ENCODE measurements at regions of chr9 and their contacts with region 1.

Region 1: DNA sequence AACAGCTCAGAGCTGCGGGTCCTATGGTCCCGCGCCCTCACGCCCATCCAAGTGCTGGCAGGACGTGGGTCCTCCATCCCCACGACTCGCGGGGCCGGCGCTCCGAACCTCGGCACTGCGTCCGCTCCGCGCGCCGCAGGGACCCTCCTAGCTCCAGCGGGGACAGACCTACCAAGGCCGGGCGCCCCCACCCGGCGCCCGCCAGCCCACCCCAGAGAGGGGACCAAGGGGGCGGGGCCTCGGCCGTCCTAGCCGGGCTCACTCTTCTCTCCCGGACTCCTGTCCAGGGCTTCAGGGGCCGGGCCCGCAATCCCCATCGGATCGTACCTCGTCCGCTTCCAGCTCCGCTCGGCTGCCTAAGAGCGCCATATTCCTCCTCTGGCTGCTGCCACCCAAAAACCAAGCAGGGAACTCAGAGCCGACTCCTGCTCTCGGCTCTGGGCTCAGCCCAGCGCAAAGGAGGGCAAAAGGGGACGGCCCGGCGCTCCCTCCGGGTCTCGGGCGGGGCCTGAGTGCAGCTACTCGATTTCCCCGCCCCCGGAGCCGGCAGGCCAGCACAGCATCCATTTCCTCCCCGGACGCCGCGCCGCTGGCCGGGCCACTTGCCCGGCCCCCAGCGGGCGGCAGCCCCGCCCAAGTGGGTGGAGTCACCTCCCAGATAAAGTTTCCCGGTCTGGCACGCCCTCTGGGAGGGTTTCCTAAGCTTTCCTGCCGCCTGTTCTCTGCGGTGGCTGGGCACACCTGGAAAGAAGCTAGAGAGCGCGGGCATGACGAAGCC is at the start of gene TTC39B:
- DNase-seq: peak; percentile 93 to 96 (median 93)
- H3K4me3 ChIP-seq: peak within 1 kb of the TSS; percentile 18 to 78 (median 60)
- H3K27ac ChIP-seq: peak within 1 kb of the TSS in 4 of 5 donors; percentile 22 to 88 (median 73)
- H3K4me1 ChIP-seq: peaks cover 0 to 15% of the 10 kb centered on the region in 2 donors
- H3K27me3 ChIP-seq: no peaks in the 10 kb centered on the region
- CTCF ChIP-seq: no peak
- POLR2A ChIP-seq: peak; percentile 64 to 80
- total RNA-seq, gene TTC39B: 6.8 to 14.4 (median 12.5) TPM

Region 2: GRCh38 chr9:15116130-15116580 is 190.8 kb before region 1 on chr9:
- intact Hi-C with region 1: no loop called
- DNase-seq: no peak
- H3K4me3 ChIP-seq: no peak overlapping the region
- H3K27ac ChIP-seq: no peak overlapping the region
- H3K4me1 ChIP-seq: no peaks in the 10 kb centered on the region
- H3K27me3 ChIP-seq: no peaks in the 10 kb centered on the region
- CTCF ChIP-seq: no peak
- POLR2A ChIP-seq: no peak

Region 3: GRCh38 chr9:15422372-15423230 is 115.7 kb after region 1 on chr9 and contains the start of gene SNAPC3:
- intact Hi-C with region 1: loop called in 1 of 2 experiments (anchors 10 kb)
- DNase-seq: peak; percentile 93 to 96 (median 95)
- H3K4me3 ChIP-seq: peak within 1 kb of the TSS; percentile 59 to 94 (median 83)
- H3K27ac ChIP-seq: peak within 1 kb of the TSS; percentile 29 to 94 (median 82)
- H3K4me1 ChIP-seq: peaks cover 17 to 44% of the 10 kb centered on the region in 2 donors
- H3K27me3 ChIP-seq: no peaks in the 10 kb centered on the region
- CTCF ChIP-seq: peak in 2 of 6 experiments; percentile 15 to 24
- POLR2A ChIP-seq: peak; percentile 57 to 88
- total RNA-seq, gene SNAPC3: 25.8 to 62.2 (median 44.1) TPM

Region 4: DNA sequence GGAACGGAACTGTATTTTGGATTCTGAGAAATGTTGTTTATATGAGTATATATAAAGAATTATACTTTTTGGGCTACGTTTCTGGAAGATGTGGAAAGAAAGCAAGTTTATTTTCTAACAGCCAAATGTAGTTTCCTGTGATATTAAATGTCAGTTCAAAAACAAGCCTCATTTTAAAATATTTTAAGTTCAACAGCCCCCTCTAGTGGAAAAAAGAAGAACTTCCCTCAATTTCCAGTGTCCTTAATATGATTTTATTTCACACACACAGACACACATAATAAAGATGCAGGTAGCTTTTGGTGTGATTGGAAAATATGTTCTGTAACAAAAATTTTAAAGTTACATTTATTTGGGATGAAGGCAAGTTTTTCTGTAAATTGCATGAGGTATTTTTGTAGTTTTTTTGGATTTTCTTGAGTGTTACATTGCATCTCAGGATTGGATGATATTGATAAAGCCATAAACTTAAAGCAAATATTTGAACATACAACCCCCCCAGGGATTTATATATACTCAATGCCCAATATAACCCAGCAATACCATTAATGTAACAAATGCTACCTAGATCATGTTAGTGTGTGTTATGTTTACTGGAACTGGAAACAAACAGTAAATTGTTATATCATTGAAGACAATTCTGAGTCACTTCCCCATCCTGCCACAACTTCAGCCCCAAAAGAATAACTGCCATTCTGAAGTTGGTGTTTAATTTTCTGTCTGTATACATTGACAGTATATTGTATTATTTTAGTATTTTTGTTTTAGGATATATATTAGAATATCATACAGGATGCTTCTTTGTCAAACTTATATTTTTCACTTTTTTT is 299.9 kb after region 1 on chr9:
- intact Hi-C with region 1: no loop called
- DNase-seq: peak in 1 of 7 donors; percentile 8
- H3K4me3 ChIP-seq: no peak overlapping the region
- H3K27ac ChIP-seq: no peak overlapping the region
- H3K4me1 ChIP-seq: no peaks in the 10 kb centered on the region
- H3K27me3 ChIP-seq: no peaks in the 10 kb centered on the region
- CTCF ChIP-seq: peak; percentile 60 to 84 (median 76)
- POLR2A ChIP-seq: no peak